ENCODE measurements at regions of chr19 and their contacts with region 1.

Region 1: GRCh38 chr19:4957981-4958380 is 10.9 kb upstream of the KDM4B start:
- DNase-seq: peak in 1 of 2 experiments; percentile 67
- H3K4me3 ChIP-seq: no peak overlapping the region
- H3K27ac ChIP-seq: no peak overlapping the region
- H3K4me1 ChIP-seq: no peaks in the 10 kb centered on the region
- H3K27me3 ChIP-seq: no peaks in the 10 kb centered on the region
- CTCF ChIP-seq: no peak

Region 2: DNA sequence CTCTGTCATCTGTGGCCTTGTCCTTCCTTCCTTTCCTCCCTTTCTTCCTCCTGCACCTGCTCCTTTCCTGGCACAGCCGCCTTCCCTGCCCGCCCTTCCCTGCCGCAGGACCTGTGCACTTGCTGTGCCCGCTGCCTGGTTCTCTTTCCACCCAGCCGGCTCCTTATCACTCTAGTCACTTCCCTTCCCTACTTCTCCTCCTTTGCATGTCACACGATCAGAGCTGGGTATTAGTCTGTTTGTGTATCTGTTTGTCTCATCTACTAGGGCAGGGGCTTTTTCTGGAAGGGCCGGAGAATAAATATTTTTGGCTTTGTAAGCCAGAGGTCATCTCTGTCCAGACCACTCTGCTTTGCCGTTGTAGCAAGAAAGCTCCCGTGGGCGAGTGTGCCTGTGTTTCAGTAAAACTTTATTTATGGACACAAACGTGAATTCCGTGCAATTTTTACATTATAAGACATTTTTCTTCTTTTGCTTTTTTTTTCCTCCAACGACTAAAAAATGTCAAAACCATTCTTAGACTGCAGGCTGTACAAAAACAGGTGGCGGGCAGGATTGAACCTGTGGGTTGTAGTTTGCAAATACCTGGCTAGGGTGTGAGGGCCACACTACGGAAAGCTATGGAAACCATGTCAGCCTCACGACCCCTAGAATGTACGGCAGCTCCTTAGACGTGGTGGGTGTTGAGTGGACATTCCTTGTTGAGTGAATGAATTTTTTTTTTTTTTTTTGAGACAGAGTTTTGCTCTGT is 17.1 kb after region 1 on chr19:
- CTCF ChIA-PET with region 1: no interaction called
- POLR2A ChIA-PET with region 1: interaction called, 10 read pairs
- intact Hi-C with region 1: no loop called
- DNase-seq: no peak
- H3K4me3 ChIP-seq: no peak overlapping the region
- H3K27ac ChIP-seq: no peak overlapping the region
- H3K4me1 ChIP-seq: peaks cover 27% of the 10 kb centered on the region
- H3K27me3 ChIP-seq: no peaks in the 10 kb centered on the region
- CTCF ChIP-seq: no peak